ENCODE measurements at regions of chr2 and their contacts with region 1.

Region 1: GRCh38 chr2:120109186-120110061 is 96.5 kb downstream of the EPB41L5 start:
- DNase-seq: peak; percentile 76
- ATAC-seq: peak; percentile 56
- H3K4me3 ChIP-seq: 0 out of 2 replicates have a peak overlapping the region, but pooled peaks have one; percentile 29
- H3K27ac ChIP-seq: peak overlapping the region; percentile 83
- H3K4me1 ChIP-seq: peaks cover 45% of the 10 kb centered on the region
- H3K27me3 ChIP-seq: no peaks in the 10 kb centered on the region
- CTCF ChIP-seq: peak; percentile 86

Region 2: DNA sequence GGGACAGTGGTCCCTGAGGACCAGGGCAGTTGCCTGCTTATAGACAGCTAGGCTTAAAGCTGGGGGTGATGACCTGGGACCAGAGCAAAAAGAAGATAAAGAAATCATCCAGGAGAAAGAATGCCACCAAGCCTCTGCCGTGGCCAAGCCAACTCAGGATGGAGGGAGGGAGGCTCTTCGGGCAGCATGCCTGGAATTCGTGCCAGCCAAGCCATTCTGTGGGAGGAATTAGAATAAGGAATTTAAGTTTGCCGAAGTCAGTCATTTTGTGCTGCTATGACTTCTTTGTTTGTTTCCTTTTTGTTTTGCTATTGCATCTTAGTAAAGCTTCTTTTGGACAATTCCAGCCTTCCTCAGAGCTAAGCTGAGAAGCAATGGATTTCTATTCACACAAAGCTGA is 1386.0 kb before region 1 on chr2:
- CTCF ChIA-PET with region 1: no interaction called
- POLR2A ChIA-PET with region 1: no interaction called
- intact Hi-C with region 1: no loop called
- DNase-seq: peak; percentile 92
- ATAC-seq: peak; percentile 61
- H3K4me3 ChIP-seq: peak overlapping the region; percentile 37; the same call in 1 of the 2 replicates
- H3K27ac ChIP-seq: peak overlapping the region; percentile 91
- H3K4me1 ChIP-seq: peaks cover 37% of the 10 kb centered on the region
- H3K27me3 ChIP-seq: no peaks in the 10 kb centered on the region
- CTCF ChIP-seq: no peak

Region 3: DNA sequence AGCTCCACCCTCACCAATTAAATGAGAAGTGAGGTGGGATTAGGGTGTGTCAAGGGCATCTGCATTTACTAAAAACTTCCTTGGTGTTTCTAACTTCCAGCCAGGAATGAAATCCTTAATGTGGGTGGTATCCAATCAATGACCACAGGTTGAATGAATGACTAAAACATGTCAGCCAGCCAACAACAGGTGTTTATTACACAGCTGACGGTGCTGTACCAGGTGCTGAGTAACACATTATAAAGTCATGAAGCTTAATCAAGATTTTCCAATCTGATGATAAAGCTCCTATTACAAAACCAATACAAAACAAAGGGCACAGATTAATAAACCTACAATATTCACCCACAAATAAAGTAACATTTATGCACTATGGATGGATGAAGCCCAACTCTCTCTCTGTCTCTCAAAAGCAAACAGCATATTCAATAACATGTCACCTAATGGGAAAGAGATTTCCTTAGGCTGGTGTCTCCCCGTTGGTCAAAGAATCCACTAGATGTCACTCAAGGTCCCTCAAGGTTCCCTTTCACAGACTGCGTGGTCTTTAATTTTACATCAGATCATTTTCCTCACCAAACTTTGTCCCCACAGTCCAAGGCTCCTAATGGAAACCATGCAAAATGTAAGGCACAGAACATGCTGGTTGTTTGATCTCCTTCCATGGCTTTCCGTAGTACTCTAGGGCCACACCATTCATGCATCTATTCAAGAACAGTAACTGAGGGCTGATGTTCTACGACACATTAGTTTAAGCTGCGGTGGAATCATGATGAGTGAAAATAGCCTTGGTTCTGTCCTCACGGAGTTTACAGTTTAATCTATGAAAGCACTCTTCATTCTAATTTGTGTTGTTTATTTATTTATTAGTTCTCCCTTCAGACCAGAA is 356.1 kb before region 1 on chr2:
- CTCF ChIA-PET with region 1: interaction called, 3 read pairs
- POLR2A ChIA-PET with region 1: no interaction called
- intact Hi-C with region 1: loop called (anchors 5 kb)
- DNase-seq: peak; percentile 68
- ATAC-seq: peak; percentile 58
- H3K4me3 ChIP-seq: no peak overlapping the region
- H3K27ac ChIP-seq: no peak overlapping the region
- H3K4me1 ChIP-seq: peaks cover 45% of the 10 kb centered on the region
- H3K27me3 ChIP-seq: no peaks in the 10 kb centered on the region
- CTCF ChIP-seq: peak; percentile 79

Region 4: GRCh38 chr2:120012771-120013596 is 96.4 kb before region 1 on chr2 and contains the start of gene EPB41L5:
- CTCF ChIA-PET with region 1: no interaction called
- POLR2A ChIA-PET with region 1: no interaction called
- intact Hi-C with region 1: loop called (anchors 2 kb)
- DNase-seq: peak; percentile 96
- ATAC-seq: peak; percentile 91
- H3K4me3 ChIP-seq: peak within 1 kb of the TSS; percentile 80
- H3K27ac ChIP-seq: peak within 1 kb of the TSS; percentile 48
- H3K4me1 ChIP-seq: peaks cover 17% of the 10 kb centered on the region
- H3K27me3 ChIP-seq: no peaks in the 10 kb centered on the region
- CTCF ChIP-seq: 0 out of 2 replicates have a peak, but pooled peaks have one; percentile 8
- total RNA-seq, gene EPB41L5: 11.7 and 14.0 TPM in 2 replicates

Region 5: GRCh38 chr2:120134263-120134662 is 24.8 kb after region 1 on chr2:
- CTCF ChIA-PET with region 1: interaction called, 3 read pairs
- POLR2A ChIA-PET with region 1: no interaction called
- intact Hi-C with region 1: loop called (anchors 1 kb)
- DNase-seq: peak; percentile 99
- ATAC-seq: peak; percentile 100
- H3K4me3 ChIP-seq: no peak overlapping the region
- H3K27ac ChIP-seq: peak overlapping the region; percentile 93
- H3K4me1 ChIP-seq: peaks cover 25% of the 10 kb centered on the region
- H3K27me3 ChIP-seq: no peaks in the 10 kb centered on the region
- CTCF ChIP-seq: no peak

Region 6: GRCh38 chr2:120174963-120175581 is 65.6 kb after region 1 on chr2:
- CTCF ChIA-PET with region 1: interaction called, 33 read pairs
- POLR2A ChIA-PET with region 1: no interaction called
- intact Hi-C with region 1: loop called (anchors 1 kb)
- DNase-seq: peak; percentile 84
- ATAC-seq: peak; percentile 62
- H3K4me3 ChIP-seq: no peak overlapping the region
- H3K27ac ChIP-seq: no peak overlapping the region
- H3K4me1 ChIP-seq: no peaks in the 10 kb centered on the region
- H3K27me3 ChIP-seq: no peaks in the 10 kb centered on the region
- CTCF ChIP-seq: peak; percentile 85